ENCODE measurements at regions of chr4 and their contacts with region 1.

Region 1: GRCh38 chr4:9987749-9988362 is 33.4 kb downstream of the SLC2A9 start:
- DNase-seq: no peak
- ATAC-seq: peak; percentile 80
- H3K4me3 ChIP-seq: peak overlapping the region; percentile 5; the same call in 1 of the 2 replicates
- H3K27ac ChIP-seq: peak overlapping the region; percentile 42
- H3K4me1 ChIP-seq: peaks cover 10% of the 10 kb centered on the region
- H3K27me3 ChIP-seq: no peaks in the 10 kb centered on the region
- CTCF ChIP-seq: no peak
- EP300 ChIP-seq: no peak
- POLR2A ChIP-seq: no peak
- RAD21 ChIP-seq: no peak

Region 2: GRCh38 chr4:9685692-9686091 is 302.2 kb before region 1 on chr4:
- CTCF ChIA-PET with region 1: no interaction called
- POLR2A ChIA-PET with region 1: no interaction called
- RAD21 ChIA-PET with region 1: no interaction called
- SMC1A ChIA-PET with region 1: no interaction called
- in situ Hi-C with region 1: no loop called
- intact Hi-C with region 1: no loop called
- DNase-seq: no peak
- ATAC-seq: no peak
- H3K4me3 ChIP-seq: no peak overlapping the region
- H3K27ac ChIP-seq: no peak overlapping the region
- H3K4me1 ChIP-seq: no peaks in the 10 kb centered on the region
- H3K27me3 ChIP-seq: no peaks in the 10 kb centered on the region; a peak in 1 of 4 replicates
- CTCF ChIP-seq: no peak
- EP300 ChIP-seq: no peak
- POLR2A ChIP-seq: no peak
- RAD21 ChIP-seq: no peak

Region 3: GRCh38 chr4:9964879-9965278 is 23.0 kb before region 1 on chr4:
- CTCF ChIA-PET with region 1: interaction called, 5 read pairs
- POLR2A ChIA-PET with region 1: no interaction called
- RAD21 ChIA-PET with region 1: interaction called, 10 read pairs
- SMC1A ChIA-PET with region 1: interaction called, 9 read pairs
- in situ Hi-C with region 1: no loop called
- intact Hi-C with region 1: no loop called
- DNase-seq: no peak
- ATAC-seq: peak; percentile 61
- H3K4me3 ChIP-seq: no peak overlapping the region
- H3K27ac ChIP-seq: no peak overlapping the region
- H3K4me1 ChIP-seq: peaks cover 4% of the 10 kb centered on the region
- H3K27me3 ChIP-seq: no peaks in the 10 kb centered on the region
- CTCF ChIP-seq: no peak
- EP300 ChIP-seq: no peak
- POLR2A ChIP-seq: no peak
- RAD21 ChIP-seq: no peak

Region 4: DNA sequence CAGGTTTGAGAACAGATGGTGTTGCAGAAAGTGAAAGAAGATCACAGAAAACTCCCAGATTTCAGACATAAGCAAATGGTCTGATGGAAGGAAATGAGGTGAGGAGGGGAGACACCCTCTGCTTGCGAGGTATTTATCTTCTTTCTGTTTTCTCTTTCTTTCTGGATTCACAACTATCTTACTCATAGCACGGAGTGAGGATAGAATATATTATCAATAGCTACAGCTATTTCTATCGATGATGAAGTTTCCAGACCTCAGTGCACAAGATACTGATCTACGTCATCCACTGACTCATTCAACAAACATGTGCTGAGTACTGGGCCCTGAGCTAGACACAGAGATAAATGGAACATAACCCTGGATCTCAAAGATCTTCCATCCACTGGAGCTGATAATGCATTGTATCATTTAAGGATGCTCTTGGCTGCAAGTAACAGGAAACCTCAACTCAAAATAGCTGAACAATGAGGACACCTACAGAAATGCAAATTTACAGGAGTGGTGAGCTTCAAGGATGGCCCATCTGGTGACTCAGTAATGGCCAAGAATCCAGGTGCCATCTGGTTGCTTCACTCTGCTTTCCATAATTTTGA is 12.2 kb after region 1 on chr4:
- CTCF ChIA-PET with region 1: interaction called, 6 read pairs
- POLR2A ChIA-PET with region 1: interaction called, 15 read pairs
- RAD21 ChIA-PET with region 1: interaction called, 41 read pairs
- SMC1A ChIA-PET with region 1: interaction called, 43 read pairs
- in situ Hi-C with region 1: no loop called
- intact Hi-C with region 1: no loop called
- DNase-seq: no peak
- ATAC-seq: peak; percentile 57
- H3K4me3 ChIP-seq: no peak overlapping the region
- H3K27ac ChIP-seq: peak overlapping the region; percentile 60
- H3K4me1 ChIP-seq: peaks cover 44% of the 10 kb centered on the region
- H3K27me3 ChIP-seq: no peaks in the 10 kb centered on the region
- CTCF ChIP-seq: no peak
- EP300 ChIP-seq: no peak
- POLR2A ChIP-seq: no peak
- RAD21 ChIP-seq: no peak